ENCODE measurements at regions of chr22 and their contacts with region 1.

Region 1: GRCh38 chr22:29553351-29554224 is at the start of gene THOC5:
- DNase-seq: peak; percentile 84
- H3K4me3 ChIP-seq: peak within 1 kb of the TSS; percentile 73
- H3K27ac ChIP-seq: peak within 1 kb of the TSS; percentile 87
- H3K27me3 ChIP-seq: no peaks in the 10 kb centered on the region
- CTCF ChIP-seq: peak; percentile 74
- polyA plus RNA-seq, gene THOC5: 92.0 and 93.7 TPM in 2 replicates

Region 2: DNA sequence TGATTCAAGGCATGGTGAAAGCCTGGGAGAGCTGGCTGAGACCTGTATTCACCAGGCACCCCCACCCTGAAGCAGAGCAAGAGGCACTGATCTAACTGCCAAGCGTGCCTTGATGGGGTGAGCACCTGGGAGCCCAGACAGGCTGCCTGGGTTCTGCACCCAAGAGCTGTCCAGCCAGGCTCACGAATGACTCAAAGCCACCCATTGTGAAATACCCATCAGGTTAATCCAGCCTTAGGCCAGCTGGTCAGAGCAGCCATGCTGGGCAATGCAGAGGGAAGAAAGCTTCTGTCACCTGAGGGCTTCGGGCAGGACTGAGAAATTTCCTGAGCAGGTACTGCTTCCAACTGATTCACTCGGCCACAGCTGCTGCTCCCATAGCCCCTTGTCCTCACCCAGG is 22.2 kb before region 1 on chr22:
- CTCF ChIA-PET with region 1: interaction called, 10 read pairs
- POLR2A ChIA-PET with region 1: no interaction called
- DNase-seq: no peak
- H3K4me3 ChIP-seq: no peak overlapping the region
- H3K27ac ChIP-seq: no peak overlapping the region
- H3K27me3 ChIP-seq: no peaks in the 10 kb centered on the region
- CTCF ChIP-seq: no peak

Region 3: DNA sequence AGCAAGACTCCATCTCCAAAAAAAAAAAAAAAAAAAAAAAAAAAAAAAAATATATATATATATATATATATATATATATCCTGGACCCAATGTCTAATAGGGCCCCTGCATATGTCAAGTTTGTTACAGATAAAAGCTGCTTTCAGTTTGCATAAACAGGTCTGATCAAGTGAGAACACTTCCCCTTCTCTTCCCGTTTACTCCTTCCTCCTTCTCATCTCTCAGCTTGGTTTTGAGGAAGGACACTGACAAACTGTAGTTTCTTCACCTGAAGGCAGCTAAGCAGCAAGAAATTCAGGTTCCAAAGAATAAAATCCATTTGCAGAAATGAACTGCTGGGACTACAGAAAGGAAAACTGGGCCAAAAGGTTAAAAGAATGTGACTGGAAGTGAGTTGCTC is 11.7 kb before region 1 on chr22:
- CTCF ChIA-PET with region 1: interaction called, 17 read pairs
- POLR2A ChIA-PET with region 1: interaction called, 5 read pairs
- DNase-seq: no peak
- H3K4me3 ChIP-seq: no peak overlapping the region
- H3K27ac ChIP-seq: no peak overlapping the region
- H3K27me3 ChIP-seq: no peaks in the 10 kb centered on the region
- CTCF ChIP-seq: no peak

Region 4: DNA sequence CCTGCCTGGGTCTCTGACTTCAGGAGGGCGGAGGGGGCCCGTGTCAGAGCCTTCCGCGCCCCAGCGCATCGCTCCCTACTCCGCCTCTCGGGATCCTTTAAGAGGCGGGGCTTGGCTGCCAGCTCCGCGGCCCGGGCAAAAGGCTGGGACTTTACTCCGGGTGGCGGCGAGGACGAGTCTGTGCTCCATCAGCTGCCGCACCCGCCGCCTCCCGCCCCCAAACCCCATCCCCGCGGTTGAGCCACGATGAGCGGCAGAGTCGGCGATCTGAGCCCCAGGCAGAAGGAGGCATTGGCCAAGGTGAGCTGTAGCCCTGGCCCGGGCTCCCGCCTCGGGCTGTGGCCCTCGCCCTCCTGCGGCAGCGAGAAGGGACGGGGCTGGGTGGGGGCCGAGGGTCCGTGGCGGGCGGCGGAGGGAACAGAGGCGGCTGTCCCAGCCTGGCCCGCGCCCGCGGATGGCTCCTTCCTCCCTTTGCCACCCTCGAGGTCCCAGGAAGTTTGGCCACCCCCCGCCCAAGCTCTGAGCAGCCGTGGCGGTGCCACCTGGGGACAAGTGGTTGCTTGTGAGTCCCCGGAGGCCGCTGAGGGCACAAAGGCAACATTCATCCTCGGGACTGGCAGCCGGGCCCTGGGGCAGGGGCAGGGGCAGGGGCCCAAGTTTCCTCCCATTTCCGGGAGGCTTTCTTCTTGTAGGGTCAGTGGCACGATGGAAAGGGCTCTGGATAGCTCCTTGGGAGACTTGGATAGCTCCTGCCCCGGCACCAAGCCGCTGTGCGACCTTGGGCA is 843.5 kb after region 1 on chr22 and contains the start of gene SEC14L2:
- CTCF ChIA-PET with region 1: no interaction called
- POLR2A ChIA-PET with region 1: interaction called, 12 read pairs
- DNase-seq: no peak
- H3K4me3 ChIP-seq: peak within 1 kb of the TSS; percentile 82
- H3K27ac ChIP-seq: peak within 1 kb of the TSS; percentile 11
- H3K27me3 ChIP-seq: no peaks in the 10 kb centered on the region
- CTCF ChIP-seq: no peak
- polyA plus RNA-seq, gene SEC14L2: 15.8 and 17.7 TPM in 2 replicates

Measured in AG04450 (cell line).